PC-9 (cell line): ENCODE measurements at regions of chr17 and their contacts with region 1.

Region 1: DNA sequence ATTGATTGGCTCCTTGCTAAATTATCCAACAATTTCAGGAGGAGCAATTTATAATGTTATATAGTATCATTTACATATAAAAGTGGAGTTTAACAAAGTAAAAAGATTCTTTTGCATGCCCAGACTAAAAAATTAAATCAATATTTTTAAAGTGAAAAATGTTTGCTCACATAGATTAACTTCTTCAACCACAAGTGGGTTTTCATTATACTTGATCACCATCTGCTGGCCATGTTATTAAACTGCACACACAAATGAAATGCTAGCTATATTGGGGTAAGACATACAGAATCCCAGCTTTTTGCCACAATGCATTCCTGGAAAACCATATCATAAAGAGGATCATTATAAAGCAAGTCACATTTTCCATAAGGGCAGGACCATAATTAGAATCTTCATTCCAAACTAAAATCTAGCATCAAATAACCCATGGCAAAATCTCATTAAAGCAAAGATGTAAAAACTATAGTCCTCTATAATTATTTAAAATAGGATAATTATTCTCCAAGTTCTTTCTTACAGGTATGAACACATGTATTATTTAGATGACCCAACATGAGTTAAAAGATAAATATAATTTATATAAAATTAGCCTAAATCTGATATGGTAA is 26.3 kb downstream of the CEP112 start:
- DNase-seq: peak in 1 of 2 experiments; percentile 9
- H3K4me3 ChIP-seq: no peak overlapping the region
- H3K27ac ChIP-seq: no peak overlapping the region
- H3K4me1 ChIP-seq: no peaks in the 10 kb centered on the region
- H3K27me3 ChIP-seq: no peaks in the 10 kb centered on the region
- CTCF ChIP-seq: peak; percentile 87

Region 2: DNA sequence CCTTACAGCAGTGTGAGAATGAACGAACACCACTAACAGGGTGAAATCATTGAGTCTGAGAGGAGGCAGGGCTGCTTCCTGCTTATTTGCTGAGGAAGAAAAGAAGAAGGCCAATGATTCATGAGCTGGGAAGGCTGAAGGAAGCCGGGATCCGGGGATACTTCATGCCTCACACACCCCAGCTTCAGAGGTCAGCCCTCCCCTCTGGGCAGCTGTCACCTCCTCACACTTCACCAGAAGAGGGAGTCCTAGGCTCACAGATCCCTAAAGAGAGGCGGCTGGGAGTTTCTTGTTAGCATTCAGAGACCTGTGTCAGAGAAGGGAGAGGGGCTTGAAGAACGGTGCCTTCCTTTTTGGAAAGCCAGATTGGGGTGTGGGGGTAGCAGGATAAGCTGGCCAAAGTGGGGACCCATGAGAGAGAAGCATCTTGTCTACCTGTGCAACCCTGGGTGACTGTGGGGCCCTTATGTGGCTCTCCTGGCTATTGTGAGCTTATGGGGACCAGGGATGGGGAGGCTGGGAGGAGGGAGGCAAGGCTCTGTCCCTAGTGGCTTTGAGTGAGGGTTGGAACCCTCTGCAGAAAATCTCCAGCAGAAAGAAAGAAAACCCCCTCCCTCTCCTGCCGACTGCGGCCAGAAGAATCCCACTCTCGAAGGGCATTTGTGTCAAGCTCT is 933.8 kb before region 1 on chr17:
- CTCF ChIA-PET with region 1: interaction called, 11 read pairs
- POLR2A ChIA-PET with region 1: no interaction called
- intact Hi-C with region 1: loop called (anchors 1 kb)
- DNase-seq: peak; percentile 63 to 78
- H3K4me3 ChIP-seq: no peak overlapping the region
- H3K27ac ChIP-seq: no peak overlapping the region
- H3K4me1 ChIP-seq: peaks cover 16% of the 10 kb centered on the region
- H3K27me3 ChIP-seq: no peaks in the 10 kb centered on the region
- CTCF ChIP-seq: peak; percentile 83

Region 3: DNA sequence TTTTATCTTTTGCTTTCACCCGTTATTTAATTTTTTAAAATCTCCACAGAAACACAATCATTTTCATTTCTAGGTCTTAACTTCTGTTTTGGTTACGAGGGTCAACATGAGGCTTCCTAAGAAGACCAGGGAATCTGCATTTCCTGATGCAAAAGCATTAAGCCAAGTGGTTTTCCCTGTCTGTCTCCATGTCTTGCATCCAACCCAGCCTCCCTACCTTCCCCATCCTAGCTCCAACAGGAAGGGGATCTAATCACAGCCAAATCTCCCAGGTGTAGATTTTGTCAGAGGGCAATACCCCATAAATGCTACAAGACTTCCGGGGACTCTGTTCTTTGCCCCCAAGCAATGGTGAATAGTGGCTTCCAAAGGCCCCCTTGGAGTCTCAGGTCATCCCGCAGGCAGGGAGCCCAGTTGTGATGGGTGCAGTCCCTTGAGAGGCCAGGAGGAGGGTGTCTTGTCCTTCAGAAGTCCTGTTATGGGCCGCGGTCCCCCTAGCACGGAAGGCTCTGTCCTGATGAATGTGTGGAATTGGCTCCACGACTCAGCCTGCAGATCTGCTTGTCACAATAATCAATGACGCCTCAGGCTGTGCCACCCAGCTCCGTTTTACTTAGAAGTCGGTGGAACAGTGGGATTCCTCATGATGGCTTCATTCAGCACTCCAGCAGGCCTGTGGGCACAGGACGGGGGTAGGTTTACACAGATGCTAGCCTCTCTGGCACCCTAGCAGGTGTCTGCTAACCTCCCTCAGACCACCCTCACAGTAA is 887.4 kb before region 1 on chr17:
- CTCF ChIA-PET with region 1: no interaction called
- POLR2A ChIA-PET with region 1: no interaction called
- intact Hi-C with region 1: loop called (anchors 5 kb)
- DNase-seq: peak; percentile 20 to 46
- H3K4me3 ChIP-seq: no peak overlapping the region
- H3K27ac ChIP-seq: no peak overlapping the region
- H3K4me1 ChIP-seq: no peaks in the 10 kb centered on the region
- H3K27me3 ChIP-seq: no peaks in the 10 kb centered on the region
- CTCF ChIP-seq: peak; percentile 82

Region 4: DNA sequence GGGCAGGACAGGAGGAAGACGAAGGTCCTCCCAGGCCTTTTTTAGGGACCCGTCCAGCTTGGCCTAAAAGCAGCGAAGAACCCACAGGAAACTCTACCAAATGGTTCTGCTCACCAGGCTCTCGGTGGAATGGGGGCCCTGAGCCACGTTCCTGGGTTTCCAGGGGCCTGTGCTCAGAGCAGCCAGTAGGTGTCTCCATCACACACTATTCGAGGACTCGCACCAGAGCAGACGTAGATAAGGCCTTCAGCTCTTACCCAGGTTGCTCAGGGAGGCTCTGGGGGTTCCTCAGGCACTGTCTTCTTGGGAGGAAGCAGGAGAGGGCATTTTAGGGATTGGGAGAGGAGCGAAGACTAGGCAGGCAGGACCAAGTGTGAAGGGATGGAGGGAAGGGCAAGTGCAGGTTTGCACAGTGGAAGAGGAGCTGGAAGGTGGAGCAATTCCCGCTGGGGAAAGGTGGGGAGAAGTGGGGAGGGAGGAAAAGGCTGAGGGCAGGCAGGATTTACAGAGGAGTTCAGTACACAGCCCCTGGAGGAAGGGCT is 871.4 kb before region 1 on chr17:
- CTCF ChIA-PET with region 1: interaction called, 7 read pairs
- POLR2A ChIA-PET with region 1: no interaction called
- intact Hi-C with region 1: loop called (anchors 1 kb)
- DNase-seq: peak; percentile 32 to 40
- H3K4me3 ChIP-seq: no peak overlapping the region
- H3K27ac ChIP-seq: no peak overlapping the region
- H3K4me1 ChIP-seq: no peaks in the 10 kb centered on the region
- H3K27me3 ChIP-seq: no peaks in the 10 kb centered on the region
- CTCF ChIP-seq: peak; percentile 77